Posterior cingulate gyrus (tissue), 11 donors: ENCODE measurements at regions of chr2 and their contacts with region 1.

Region 1: DNA sequence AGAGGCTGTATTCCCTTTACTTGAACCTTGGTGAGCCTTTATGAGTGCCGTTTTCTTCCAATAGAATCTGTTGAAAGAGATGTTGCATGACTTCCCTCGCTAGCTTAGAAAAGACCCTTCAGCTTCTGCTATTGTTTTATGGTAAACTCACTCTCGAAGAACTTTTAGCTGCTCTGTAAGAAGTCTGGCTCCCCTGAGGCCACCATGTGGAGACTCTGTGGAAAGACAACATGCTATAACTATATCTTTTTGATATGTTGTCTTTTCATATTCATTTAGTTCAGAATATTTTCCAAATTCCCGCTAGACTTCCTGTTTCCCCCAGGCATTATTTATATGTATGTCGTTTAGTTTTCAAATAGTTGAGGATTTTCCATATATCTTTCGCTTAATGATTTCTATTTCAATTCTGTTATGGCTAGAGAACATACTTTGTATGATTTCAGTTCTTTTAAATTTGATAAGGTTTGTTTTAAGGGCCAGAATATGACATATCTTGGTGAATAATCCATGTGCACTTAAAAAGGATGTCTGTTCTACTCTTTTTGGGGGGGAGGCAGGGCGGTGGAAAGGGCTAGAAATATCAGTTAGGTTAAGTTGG is 64.1 kb downstream of the PTPN4 start:
- DNase-seq: peak in 5 of 10 donors; percentile 24 to 85 (median 42)

Region 2: DNA sequence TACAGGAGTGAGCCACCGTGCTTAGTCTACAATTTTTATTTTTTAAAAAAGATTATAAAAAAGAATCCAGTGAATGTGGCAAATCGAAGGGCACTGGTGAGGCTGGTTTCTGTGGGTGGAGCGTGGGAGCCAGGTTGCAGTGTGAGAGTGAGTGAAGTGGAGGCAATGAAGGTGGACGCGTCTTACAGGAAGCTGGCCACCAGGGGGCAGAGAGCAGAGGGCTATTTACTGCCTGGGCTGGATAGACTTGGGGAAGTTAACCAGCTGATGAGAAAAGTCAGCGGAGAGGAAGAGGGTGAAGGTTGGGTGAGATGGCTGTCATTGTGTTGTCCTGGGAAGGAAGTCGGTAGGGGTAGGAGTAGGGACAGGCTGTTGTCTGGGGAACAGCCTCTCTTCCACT is 306.4 kb before region 1 on chr2:
- intact Hi-C with region 1: no loop called
- DNase-seq: peak in 3 of 10 donors; percentile 22 to 33 (median 32)

Region 3: DNA sequence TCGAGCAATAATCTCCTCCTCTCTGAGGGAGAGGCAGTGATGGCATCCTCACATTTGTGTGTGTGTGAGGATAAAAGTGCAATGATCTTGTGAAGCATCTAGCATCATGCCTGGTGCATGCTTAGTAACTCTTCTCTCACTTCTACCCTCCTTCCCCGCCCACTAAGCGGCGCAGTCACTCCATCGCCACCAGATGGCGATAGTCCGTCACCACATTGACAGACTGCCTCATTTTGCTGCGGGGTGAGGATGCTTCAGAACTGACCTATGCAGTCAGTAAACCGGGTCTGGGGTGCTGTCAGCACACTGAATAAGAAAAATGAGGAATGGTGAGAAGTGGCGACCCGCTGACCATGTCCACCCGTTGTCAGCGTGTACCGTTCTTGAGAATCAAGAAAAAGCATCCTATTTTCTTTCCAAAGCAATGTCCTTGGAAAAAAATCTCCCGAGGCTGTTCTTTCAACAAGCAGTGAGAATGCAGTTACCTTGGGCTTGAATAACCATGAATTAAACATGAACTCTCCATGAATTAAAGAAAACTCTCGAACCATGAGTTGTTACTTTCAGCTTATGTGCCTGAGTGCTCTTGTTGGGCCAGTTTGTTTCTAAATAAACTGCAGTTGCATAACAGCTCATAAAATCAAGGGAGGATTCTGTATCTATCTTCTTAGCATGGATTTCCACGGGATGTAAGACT is 182.1 kb before region 1 on chr2:
- intact Hi-C with region 1: loop called (anchors 5 kb)
- DNase-seq: peak; percentile 63 to 97 (median 84)

Region 4: GRCh38 chr2:119702918-119703401 is 120.9 kb before region 1 on chr2:
- intact Hi-C with region 1: loop called (anchors 2 kb)
- DNase-seq: peak; percentile 45 to 96 (median 72)

Region 5: DNA sequence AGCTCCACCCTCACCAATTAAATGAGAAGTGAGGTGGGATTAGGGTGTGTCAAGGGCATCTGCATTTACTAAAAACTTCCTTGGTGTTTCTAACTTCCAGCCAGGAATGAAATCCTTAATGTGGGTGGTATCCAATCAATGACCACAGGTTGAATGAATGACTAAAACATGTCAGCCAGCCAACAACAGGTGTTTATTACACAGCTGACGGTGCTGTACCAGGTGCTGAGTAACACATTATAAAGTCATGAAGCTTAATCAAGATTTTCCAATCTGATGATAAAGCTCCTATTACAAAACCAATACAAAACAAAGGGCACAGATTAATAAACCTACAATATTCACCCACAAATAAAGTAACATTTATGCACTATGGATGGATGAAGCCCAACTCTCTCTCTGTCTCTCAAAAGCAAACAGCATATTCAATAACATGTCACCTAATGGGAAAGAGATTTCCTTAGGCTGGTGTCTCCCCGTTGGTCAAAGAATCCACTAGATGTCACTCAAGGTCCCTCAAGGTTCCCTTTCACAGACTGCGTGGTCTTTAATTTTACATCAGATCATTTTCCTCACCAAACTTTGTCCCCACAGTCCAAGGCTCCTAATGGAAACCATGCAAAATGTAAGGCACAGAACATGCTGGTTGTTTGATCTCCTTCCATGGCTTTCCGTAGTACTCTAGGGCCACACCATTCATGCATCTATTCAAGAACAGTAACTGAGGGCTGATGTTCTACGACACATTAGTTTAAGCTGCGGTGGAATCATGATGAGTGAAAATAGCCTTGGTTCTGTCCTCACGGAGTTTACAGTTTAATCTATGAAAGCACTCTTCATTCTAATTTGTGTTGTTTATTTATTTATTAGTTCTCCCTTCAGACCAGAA is 70.5 kb before region 1 on chr2:
- intact Hi-C with region 1: loop called (anchors 2 kb)
- DNase-seq: peak in 1 of 10 donors; percentile 22